Caco-2 (cell line): ENCODE measurements at regions of chr9 and their contacts with region 1.

Region 1: GRCh38 chr9:104682642-104683041 is 11.7 kb upstream of the OR13D1 start:
- DNase-seq: peak in 1 of 2 experiments; percentile 37
- H3K4me3 ChIP-seq: no peak overlapping the region
- H3K4me3 Mint-ChIP-seq: no peak overlapping the region
- H3K27ac Mint-ChIP-seq: no peak overlapping the region
- H3K4me1 ChIP-seq: no peaks in the 10 kb centered on the region; the same call in 1 of the 2 replicates
- H3K4me1 Mint-ChIP-seq: no peaks in the 10 kb centered on the region
- H3K27me3 ChIP-seq: no peaks in the 10 kb centered on the region
- H3K27me3 Mint-ChIP-seq: no peaks in the 10 kb centered on the region
- CTCF ChIP-seq: peak; percentile 31 to 53

Region 2: GRCh38 chr9:103397868-103398600 is 1284.6 kb before region 1 on chr9:
- CTCF ChIA-PET with region 1: no interaction called
- POLR2A ChIA-PET with region 1: no interaction called
- intact Hi-C with region 1: loop called (anchors 10 kb)
- DNase-seq: peak; percentile 61 to 67
- H3K4me3 ChIP-seq: no peak overlapping the region
- H3K4me3 Mint-ChIP-seq: no peak overlapping the region
- H3K27ac Mint-ChIP-seq: no peak overlapping the region
- H3K4me1 ChIP-seq: no peaks in the 10 kb centered on the region
- H3K4me1 Mint-ChIP-seq: no peaks in the 10 kb centered on the region
- H3K27me3 ChIP-seq: no peaks in the 10 kb centered on the region
- H3K27me3 Mint-ChIP-seq: no peaks in the 10 kb centered on the region
- CTCF ChIP-seq: peak; percentile 51 to 65

Region 3: DNA sequence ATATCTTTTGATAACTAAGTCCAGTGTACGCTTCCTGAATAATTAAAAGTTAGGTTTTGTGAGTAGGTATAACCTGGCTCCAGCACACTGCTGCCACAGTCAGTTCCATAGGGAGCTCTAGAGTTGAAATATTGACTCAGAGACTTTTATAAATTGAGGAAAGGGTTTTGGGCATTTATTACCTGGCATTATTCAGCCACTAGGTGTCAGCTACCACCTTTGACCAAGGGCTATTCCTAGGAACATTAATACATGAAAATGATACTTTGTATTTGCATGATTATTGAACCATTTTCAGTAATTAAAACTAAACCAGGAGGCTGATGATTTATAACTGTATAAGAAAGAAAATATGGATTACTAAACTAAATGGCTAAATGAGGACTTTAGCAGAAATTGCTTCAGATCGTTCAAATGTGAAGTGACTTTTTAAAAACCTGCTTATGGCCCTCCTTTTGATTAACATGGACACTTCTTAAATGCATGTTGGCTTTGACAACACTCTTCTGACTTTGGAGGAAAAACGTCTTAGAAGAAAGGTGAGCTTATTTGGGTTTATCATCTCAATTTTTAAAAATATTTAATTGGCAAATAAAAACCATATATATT is 505.5 kb before region 1 on chr9:
- CTCF ChIA-PET with region 1: no interaction called
- POLR2A ChIA-PET with region 1: no interaction called
- intact Hi-C with region 1: loop called (anchors 1 kb)
- DNase-seq: peak in 1 of 2 experiments; percentile 7
- H3K4me3 ChIP-seq: no peak overlapping the region
- H3K4me3 Mint-ChIP-seq: no peak overlapping the region
- H3K27ac Mint-ChIP-seq: no peak overlapping the region
- H3K4me1 ChIP-seq: no peaks in the 10 kb centered on the region
- H3K4me1 Mint-ChIP-seq: no peaks in the 10 kb centered on the region
- H3K27me3 ChIP-seq: no peaks in the 10 kb centered on the region
- H3K27me3 Mint-ChIP-seq: no peaks in the 10 kb centered on the region
- CTCF ChIP-seq: peak; percentile 34 to 36

Region 4: GRCh38 chr9:104386425-104387069 is 296.1 kb before region 1 on chr9:
- CTCF ChIA-PET with region 1: no interaction called
- POLR2A ChIA-PET with region 1: no interaction called
- intact Hi-C with region 1: loop called (anchors 1 kb)
- DNase-seq: peak in 1 of 2 experiments; percentile 11
- H3K4me3 ChIP-seq: no peak overlapping the region
- H3K4me3 Mint-ChIP-seq: no peak overlapping the region
- H3K27ac Mint-ChIP-seq: no peak overlapping the region
- H3K4me1 ChIP-seq: 0 out of 2 replicates have a peak, but pooled peaks cover 7% of the 10 kb centered on the region
- H3K4me1 Mint-ChIP-seq: no peaks in the 10 kb centered on the region
- H3K27me3 ChIP-seq: no peaks in the 10 kb centered on the region
- H3K27me3 Mint-ChIP-seq: peaks cover 9% of the 10 kb centered on the region
- CTCF ChIP-seq: peak; percentile 58 to 66

Region 5: GRCh38 chr9:104494808-104495207 is 187.8 kb before region 1 on chr9:
- CTCF ChIA-PET with region 1: no interaction called
- POLR2A ChIA-PET with region 1: no interaction called
- intact Hi-C with region 1: loop called (anchors 2 kb)
- DNase-seq: no peak
- H3K4me3 ChIP-seq: no peak overlapping the region
- H3K4me3 Mint-ChIP-seq: no peak overlapping the region
- H3K27ac Mint-ChIP-seq: no peak overlapping the region
- H3K4me1 ChIP-seq: no peaks in the 10 kb centered on the region
- H3K4me1 Mint-ChIP-seq: no peaks in the 10 kb centered on the region
- H3K27me3 ChIP-seq: no peaks in the 10 kb centered on the region
- H3K27me3 Mint-ChIP-seq: no peaks in the 10 kb centered on the region
- CTCF ChIP-seq: no peak

Region 6: DNA sequence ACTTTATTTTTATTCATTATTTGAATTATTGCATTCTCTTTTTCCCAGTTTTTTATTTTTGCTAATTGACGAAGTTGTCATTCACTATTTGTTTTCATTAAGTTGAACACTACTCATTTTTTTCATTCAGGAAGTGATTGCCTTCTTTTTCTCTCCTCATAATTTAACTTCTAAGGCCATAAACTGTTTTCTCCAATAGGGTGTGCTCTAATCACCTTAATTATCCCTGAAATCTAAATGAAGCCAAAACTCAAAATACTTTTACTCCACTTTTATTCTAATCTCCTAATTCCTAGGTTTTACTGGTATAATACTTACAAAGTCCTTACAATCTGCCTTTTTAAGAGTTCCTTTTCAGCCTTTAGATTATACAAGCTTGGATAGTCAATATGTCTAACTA is 74.3 kb before region 1 on chr9:
- CTCF ChIA-PET with region 1: no interaction called
- POLR2A ChIA-PET with region 1: no interaction called
- intact Hi-C with region 1: loop called (anchors 2 kb)
- DNase-seq: no peak
- H3K4me3 ChIP-seq: no peak overlapping the region
- H3K4me3 Mint-ChIP-seq: no peak overlapping the region
- H3K27ac Mint-ChIP-seq: no peak overlapping the region
- H3K4me1 ChIP-seq: no peaks in the 10 kb centered on the region
- H3K4me1 Mint-ChIP-seq: no peaks in the 10 kb centered on the region
- H3K27me3 ChIP-seq: no peaks in the 10 kb centered on the region
- H3K27me3 Mint-ChIP-seq: peaks cover 7% of the 10 kb centered on the region
- CTCF ChIP-seq: peak; percentile 13 to 21

Region 7: GRCh38 chr9:104635456-104635855 is 47.2 kb before region 1 on chr9:
- CTCF ChIA-PET with region 1: no interaction called
- POLR2A ChIA-PET with region 1: no interaction called
- intact Hi-C with region 1: no loop called
- DNase-seq: no peak
- H3K4me3 ChIP-seq: no peak overlapping the region
- H3K4me3 Mint-ChIP-seq: no peak overlapping the region
- H3K27ac Mint-ChIP-seq: no peak overlapping the region
- H3K4me1 ChIP-seq: no peaks in the 10 kb centered on the region
- H3K4me1 Mint-ChIP-seq: no peaks in the 10 kb centered on the region
- H3K27me3 ChIP-seq: no peaks in the 10 kb centered on the region
- H3K27me3 Mint-ChIP-seq: peaks cover 5% of the 10 kb centered on the region
- CTCF ChIP-seq: no peak

Region 8: DNA sequence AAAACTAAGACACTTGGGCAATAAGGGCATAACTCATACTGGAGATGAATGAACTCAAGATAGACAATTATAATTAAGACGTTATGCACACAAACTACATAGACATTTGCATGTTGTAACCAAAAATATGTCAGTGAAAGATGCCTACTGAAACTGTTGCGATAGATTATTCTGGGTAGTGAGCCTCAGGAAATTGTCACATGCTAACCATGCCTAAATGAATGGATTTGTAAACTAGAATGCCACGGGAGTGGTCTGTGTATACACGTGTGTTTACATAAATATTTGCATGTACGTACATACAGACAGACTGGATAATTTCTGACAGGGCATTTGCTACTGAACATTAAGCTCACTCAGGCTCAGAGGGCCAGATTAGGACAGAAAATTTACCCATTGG is 82.5 kb after region 1 on chr9:
- CTCF ChIA-PET with region 1: no interaction called
- POLR2A ChIA-PET with region 1: no interaction called
- intact Hi-C with region 1: no loop called
- DNase-seq: no peak
- H3K4me3 ChIP-seq: no peak overlapping the region
- H3K4me3 Mint-ChIP-seq: peak overlapping the region; percentile 90
- H3K27ac Mint-ChIP-seq: no peak overlapping the region
- H3K4me1 ChIP-seq: no peaks in the 10 kb centered on the region
- H3K4me1 Mint-ChIP-seq: no peaks in the 10 kb centered on the region
- H3K27me3 ChIP-seq: no peaks in the 10 kb centered on the region
- H3K27me3 Mint-ChIP-seq: no peaks in the 10 kb centered on the region
- CTCF ChIP-seq: no peak